Caco-2 (cell line): ENCODE measurements at regions of chr2 and their contacts with region 1.

Region 1: GRCh38 chr2:237165405-237166276 is 80.0 kb downstream of the COPS8 start:
- DNase-seq: no peak
- H3K4me3 ChIP-seq: no peak overlapping the region
- H3K4me3 Mint-ChIP-seq: no peak overlapping the region
- H3K27ac Mint-ChIP-seq: no peak overlapping the region
- H3K4me1 ChIP-seq: no peaks in the 10 kb centered on the region
- H3K4me1 Mint-ChIP-seq: peaks cover 6% of the 10 kb centered on the region
- H3K27me3 ChIP-seq: no peaks in the 10 kb centered on the region
- H3K27me3 Mint-ChIP-seq: peaks cover 26% of the 10 kb centered on the region
- CTCF ChIP-seq: peak; percentile 17 to 34

Region 2: GRCh38 chr2:236928380-236929037 is 237.1 kb before region 1 on chr2:
- CTCF ChIA-PET with region 1: no interaction called
- POLR2A ChIA-PET with region 1: no interaction called
- intact Hi-C with region 1: no loop called
- DNase-seq: no peak
- H3K4me3 ChIP-seq: no peak overlapping the region
- H3K4me3 Mint-ChIP-seq: no peak overlapping the region
- H3K27ac Mint-ChIP-seq: no peak overlapping the region
- H3K4me1 ChIP-seq: no peaks in the 10 kb centered on the region
- H3K4me1 Mint-ChIP-seq: no peaks in the 10 kb centered on the region
- H3K27me3 ChIP-seq: no peaks in the 10 kb centered on the region
- H3K27me3 Mint-ChIP-seq: no peaks in the 10 kb centered on the region
- CTCF ChIP-seq: no peak

Region 3: DNA sequence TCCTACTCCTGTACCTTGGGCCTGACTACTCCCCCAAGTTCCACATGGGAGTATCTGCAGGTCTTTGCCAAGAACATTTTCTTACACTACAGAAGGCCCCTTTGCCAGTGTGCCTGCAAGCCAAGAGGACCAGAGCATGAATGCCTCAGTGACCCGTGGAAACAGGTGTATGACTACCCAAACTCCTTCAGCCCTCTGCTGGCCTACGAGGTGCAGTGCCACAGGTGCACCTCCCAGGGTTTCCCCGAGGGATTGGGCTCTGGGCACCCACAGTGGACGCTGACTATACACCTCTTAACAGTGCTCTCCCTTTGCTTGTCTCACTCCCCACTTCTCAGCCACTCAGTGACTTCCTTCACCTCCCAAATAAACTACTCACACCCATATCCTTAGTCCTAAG is 156.9 kb after region 1 on chr2:
- CTCF ChIA-PET with region 1: no interaction called
- POLR2A ChIA-PET with region 1: no interaction called
- intact Hi-C with region 1: loop called (anchors 5 kb)
- DNase-seq: peak in 1 of 2 experiments; percentile 30
- H3K4me3 ChIP-seq: no peak overlapping the region
- H3K4me3 Mint-ChIP-seq: no peak overlapping the region
- H3K27ac Mint-ChIP-seq: no peak overlapping the region
- H3K4me1 ChIP-seq: no peaks in the 10 kb centered on the region
- H3K4me1 Mint-ChIP-seq: no peaks in the 10 kb centered on the region
- H3K27me3 ChIP-seq: no peaks in the 10 kb centered on the region
- H3K27me3 Mint-ChIP-seq: no peaks in the 10 kb centered on the region
- CTCF ChIP-seq: peak in 1 of 2 experiments; percentile 53

Region 4: DNA sequence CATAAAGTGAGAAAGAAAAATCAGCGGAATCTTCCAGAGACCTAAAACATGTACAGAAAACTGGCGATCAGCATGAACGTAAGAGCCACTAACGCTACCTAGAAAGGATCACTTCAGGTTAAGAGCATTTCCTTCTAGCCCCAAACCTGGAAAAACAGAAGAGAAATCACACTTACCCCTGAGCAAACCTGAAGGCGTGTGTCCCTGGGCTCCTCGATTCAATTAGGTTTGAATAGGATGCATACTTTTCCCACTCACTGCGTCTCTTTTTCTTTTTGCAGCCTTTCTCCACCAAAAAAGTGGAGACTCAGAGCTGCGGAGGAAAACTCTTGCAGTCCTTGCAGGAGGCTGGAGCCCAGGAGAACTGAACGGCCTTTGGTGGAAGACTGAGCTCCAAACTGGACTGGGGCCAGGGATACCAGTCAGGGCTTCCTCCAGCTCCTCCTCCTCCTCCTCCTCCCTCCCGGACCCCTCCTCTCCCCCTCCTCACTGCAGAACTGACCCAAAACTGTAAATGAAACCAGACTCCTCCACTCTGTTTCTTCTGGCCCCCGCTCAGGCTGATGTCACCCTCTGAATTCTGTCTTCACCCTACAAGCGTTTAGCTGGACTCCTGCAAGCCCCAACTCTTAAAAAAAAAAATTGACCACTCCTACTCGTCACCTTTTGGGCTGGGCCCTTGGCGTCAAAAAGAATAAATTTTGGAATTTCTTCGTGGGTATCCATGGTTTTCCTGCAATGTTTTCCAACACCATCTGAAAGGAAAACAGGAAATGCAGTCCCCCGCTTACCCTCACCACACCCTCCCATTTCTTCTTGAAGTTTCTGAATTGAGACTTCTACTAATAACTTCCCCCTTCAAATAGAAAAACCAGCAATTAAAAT is 248.4 kb after region 1 on chr2 and contains the start of gene COL6A3:
- CTCF ChIA-PET with region 1: interaction called, 3 read pairs
- POLR2A ChIA-PET with region 1: no interaction called
- intact Hi-C with region 1: loop called (anchors 2 kb)
- DNase-seq: no peak
- H3K4me3 ChIP-seq: no peak within 1 kb of the TSS
- H3K4me3 Mint-ChIP-seq: no peak within 1 kb of the TSS
- H3K27ac Mint-ChIP-seq: no peak within 1 kb of the TSS
- H3K4me1 ChIP-seq: no peaks in the 10 kb centered on the region
- H3K4me1 Mint-ChIP-seq: no peaks in the 10 kb centered on the region
- H3K27me3 ChIP-seq: no peaks in the 10 kb centered on the region
- H3K27me3 Mint-ChIP-seq: peaks cover 11% of the 10 kb centered on the region
- CTCF ChIP-seq: no peak
- total RNA-seq, gene COL6A3: 0.73 and 2.1 TPM in 2 replicates